H1 (cell line): ENCODE measurements at regions of chr1 and their contacts with region 1.

Region 1: DNA sequence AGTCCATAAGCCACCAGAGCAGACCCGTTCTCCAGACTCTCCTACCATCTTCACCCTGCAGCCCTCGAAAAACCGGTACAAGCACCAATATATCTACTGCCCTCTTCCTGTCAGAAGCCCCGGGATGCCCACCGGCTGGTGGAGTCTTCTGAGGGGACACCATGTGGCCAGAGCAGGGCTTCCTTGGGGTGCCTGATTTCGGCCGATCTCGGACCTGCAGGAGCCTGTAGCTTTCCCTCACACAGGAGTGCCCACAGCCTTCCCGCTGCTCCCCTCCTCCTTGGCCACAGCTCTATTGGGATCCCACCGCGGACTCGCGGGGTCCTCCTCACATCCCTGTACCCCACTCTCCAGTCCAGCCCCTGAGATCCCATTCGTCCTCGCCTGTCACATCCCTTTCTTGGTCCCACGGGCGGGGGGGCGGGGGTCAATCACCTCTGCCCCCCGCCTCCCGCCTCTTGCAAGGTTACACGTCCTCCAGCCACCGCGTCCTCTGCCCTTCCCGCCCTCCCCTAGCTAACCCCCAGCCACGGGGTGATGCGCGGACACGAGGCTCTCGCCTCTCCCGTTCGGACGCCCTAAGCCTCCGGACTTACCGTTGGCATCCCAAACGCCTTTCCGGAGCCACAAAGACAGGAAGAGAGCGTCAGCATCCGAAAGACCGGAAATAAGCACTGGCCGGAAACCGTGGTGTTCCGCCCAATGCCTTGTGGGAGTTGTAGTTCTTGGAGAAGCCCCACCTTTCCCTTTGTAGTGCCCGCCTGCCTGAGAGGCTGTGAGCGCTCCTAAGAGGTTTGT is at the start of gene SSR2:
- DNase-seq: peak; percentile 73 to 84
- H3K4me3 ChIP-seq: peak within 1 kb of the TSS; percentile 92 to 97 (median 94)
- H3K27ac ChIP-seq: no peak within 1 kb of the TSS
- H3K4me1 ChIP-seq: peaks cover 0 to 3% (median under 1%) of the 10 kb centered on the region in 4 experiments; a peak in 3 of 7 replicates
- H3K27me3 ChIP-seq: peaks cover 0 to 4% (median under 1%) of the 10 kb centered on the region in 4 experiments; a peak in 1 of 7 replicates
- CTCF ChIP-seq: no peak
- EP300 ChIP-seq: no peak
- POLR2A ChIP-seq: peak in 1 of 2 experiments; percentile 74; a peak in 2 of 3 replicates
- RAD21 ChIP-seq: no peak
- total RNA-seq, gene SSR2: 190 and 196 TPM in 2 replicates

Region 2: GRCh38 chr1:155834296-155834926 is 186.1 kb before region 1 on chr1:
- CTCF ChIA-PET with region 1: no interaction called
- POLR2A ChIA-PET with region 1: no interaction called
- DNase-seq: no peak
- H3K4me3 ChIP-seq: no peak overlapping the region
- H3K27ac ChIP-seq: peak overlapping the region; percentile 45; the same call in 1 of the 2 replicates
- H3K4me1 ChIP-seq: no peaks in the 10 kb centered on the region
- H3K27me3 ChIP-seq: no peaks in the 10 kb centered on the region
- CTCF ChIP-seq: no peak
- EP300 ChIP-seq: no peak
- POLR2A ChIP-seq: no peak
- RAD21 ChIP-seq: no peak

Region 3: GRCh38 chr1:156001682-156002171 is 18.8 kb before region 1 on chr1:
- CTCF ChIA-PET with region 1: interaction called, 77 read pairs
- POLR2A ChIA-PET with region 1: interaction called, 6 read pairs
- DNase-seq: no peak
- H3K4me3 ChIP-seq: no peak overlapping the region
- H3K27ac ChIP-seq: no peak overlapping the region
- H3K4me1 ChIP-seq: peaks cover 0 to 4% (median under 1%) of the 10 kb centered on the region in 4 experiments; a peak in 3 of 7 replicates
- H3K27me3 ChIP-seq: no peaks in the 10 kb centered on the region
- CTCF ChIP-seq: no peak
- EP300 ChIP-seq: no peak
- POLR2A ChIP-seq: no peak
- RAD21 ChIP-seq: no peak

Region 4: GRCh38 chr1:156070548-156070947 is 50.1 kb after region 1 on chr1:
- CTCF ChIA-PET with region 1: interaction called, 45 read pairs
- POLR2A ChIA-PET with region 1: interaction called, 5 read pairs
- DNase-seq: no peak
- H3K4me3 ChIP-seq: no peak overlapping the region
- H3K27ac ChIP-seq: no peak overlapping the region
- H3K4me1 ChIP-seq: peaks cover 12 to 33% (median 24%) of the 10 kb centered on the region in 4 experiments; a peak in 6 of 7 replicates
- H3K27me3 ChIP-seq: no peaks in the 10 kb centered on the region
- CTCF ChIP-seq: no peak
- EP300 ChIP-seq: no peak
- POLR2A ChIP-seq: no peak
- RAD21 ChIP-seq: no peak